ENCODE measurements at regions of chr6 and their contacts with region 1.

Region 1: DNA sequence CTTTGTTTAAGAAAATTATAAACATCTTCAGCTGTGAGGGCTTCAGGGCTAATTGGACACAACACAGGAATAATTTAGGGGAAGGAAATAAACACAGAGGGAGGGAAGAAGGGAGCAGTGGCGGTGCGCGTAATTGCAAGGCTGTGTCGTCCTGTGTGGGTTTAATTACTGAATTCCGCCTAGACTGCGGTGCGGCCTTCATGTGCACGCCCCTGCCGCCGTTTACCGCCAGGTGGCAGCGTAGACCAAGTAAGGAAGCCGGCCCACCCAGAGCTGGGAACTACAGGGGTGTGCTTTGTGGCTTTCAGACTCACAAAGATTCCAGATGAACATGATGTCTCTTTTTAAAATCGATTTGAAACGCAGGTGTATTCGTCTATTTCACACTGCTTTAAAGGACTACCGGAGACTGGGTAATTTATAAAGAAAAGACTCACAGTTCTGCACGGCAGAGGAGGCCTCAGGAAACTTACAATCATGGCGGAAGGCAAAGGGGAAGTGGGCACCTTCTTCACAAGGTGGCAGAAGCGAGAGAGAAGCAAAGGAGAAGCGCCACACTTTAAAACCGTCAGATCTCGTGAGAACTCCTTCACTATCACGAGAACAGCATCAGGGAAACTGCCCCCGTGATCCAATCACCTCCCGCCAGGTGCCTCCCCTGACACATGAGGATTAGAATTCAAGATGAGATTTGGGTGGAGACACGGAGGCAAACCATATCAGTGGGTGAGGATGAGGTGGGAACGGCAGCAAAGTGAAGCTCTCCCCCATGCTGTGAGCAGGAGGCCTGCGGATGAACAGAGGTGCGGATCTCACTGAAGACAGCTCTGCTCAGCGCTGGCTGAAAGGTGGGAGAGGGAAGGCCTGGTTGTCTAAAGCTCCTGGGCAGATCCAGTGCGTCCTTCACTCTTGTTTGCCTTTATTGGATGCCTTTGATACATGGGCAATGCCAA is 222.0 kb upstream of the PDE10A start:
- DNase-seq: peak; percentile 89
- H3K4me3 ChIP-seq: peak overlapping the region in 1 of 8 donors; percentile 25
- H3K27ac ChIP-seq: no peak overlapping the region
- H3K4me1 ChIP-seq: peaks cover 0 to 6% (median 0%) of the 10 kb centered on the region in 6 donors
- H3K27me3 ChIP-seq: peaks cover 0 to 25% (median 0%) of the 10 kb centered on the region in 7 donors
- CTCF ChIP-seq: peak; percentile 50 to 91 (median 83)
- POLR2A ChIP-seq: no peak

Region 2: DNA sequence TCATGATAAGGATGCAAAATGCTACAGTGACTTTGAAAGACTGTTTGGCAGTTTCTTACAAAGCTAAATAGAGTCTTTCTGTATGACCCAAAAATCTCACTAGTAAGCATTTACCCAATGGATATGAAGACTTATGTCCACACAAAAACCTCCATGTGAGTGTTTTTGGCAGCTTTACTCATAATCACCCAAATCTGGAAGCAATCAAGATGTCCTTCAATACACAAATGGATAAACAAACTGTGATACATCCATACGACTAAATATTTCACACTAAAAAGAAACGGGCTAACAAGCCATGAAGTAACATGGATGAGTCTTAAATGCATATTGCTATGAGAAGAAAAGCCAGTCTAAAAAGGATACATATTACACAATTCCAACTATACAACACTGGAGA is 339.3 kb before region 1 on chr6:
- intact Hi-C with region 1: no loop called
- DNase-seq: no peak
- H3K4me3 ChIP-seq: no peak overlapping the region
- H3K27ac ChIP-seq: no peak overlapping the region
- H3K4me1 ChIP-seq: no peaks in the 10 kb centered on the region
- H3K27me3 ChIP-seq: no peaks in the 10 kb centered on the region
- CTCF ChIP-seq: no peak
- POLR2A ChIP-seq: no peak

Region 3: DNA sequence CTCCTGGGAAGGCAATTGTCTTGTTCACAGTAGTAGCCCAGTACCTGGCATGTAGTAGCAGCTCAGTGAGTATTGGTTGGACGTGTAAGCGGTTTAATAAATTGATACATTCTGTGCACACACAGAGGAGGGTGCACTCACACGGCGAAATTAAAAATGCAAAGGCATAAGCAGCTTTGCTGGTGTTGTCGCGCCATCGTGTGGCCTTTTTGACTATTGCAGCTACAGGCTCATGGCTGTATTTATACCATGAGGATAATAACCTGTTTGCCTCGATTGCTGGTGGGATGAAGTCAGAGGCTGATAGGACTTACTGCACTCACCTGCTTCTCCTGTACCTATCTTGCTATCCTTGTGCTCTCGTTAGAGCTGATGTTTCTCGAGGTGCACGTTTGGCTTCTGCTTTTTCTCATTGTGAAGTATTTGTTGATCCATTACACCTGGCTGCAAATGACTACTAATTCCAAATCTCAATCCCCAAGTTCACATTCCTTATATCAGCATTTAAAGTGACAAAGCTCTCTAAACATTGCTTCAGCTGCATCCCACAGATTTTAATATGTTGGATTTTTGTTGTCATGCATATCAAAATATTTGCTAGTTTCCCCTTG is 221.1 kb after region 1 on chr6:
- intact Hi-C with region 1: loop called (anchors 5 kb)
- DNase-seq: no peak
- H3K4me3 ChIP-seq: no peak overlapping the region
- H3K27ac ChIP-seq: no peak overlapping the region
- H3K4me1 ChIP-seq: peaks cover 0 to 5% (median 0%) of the 10 kb centered on the region in 6 donors
- H3K27me3 ChIP-seq: peaks cover 0 to 18% (median 0%) of the 10 kb centered on the region in 7 donors
- CTCF ChIP-seq: peak; percentile 47 to 81 (median 73)
- POLR2A ChIP-seq: no peak